ENCODE measurements at regions of chr22 and their contacts with region 1.

Region 1: DNA sequence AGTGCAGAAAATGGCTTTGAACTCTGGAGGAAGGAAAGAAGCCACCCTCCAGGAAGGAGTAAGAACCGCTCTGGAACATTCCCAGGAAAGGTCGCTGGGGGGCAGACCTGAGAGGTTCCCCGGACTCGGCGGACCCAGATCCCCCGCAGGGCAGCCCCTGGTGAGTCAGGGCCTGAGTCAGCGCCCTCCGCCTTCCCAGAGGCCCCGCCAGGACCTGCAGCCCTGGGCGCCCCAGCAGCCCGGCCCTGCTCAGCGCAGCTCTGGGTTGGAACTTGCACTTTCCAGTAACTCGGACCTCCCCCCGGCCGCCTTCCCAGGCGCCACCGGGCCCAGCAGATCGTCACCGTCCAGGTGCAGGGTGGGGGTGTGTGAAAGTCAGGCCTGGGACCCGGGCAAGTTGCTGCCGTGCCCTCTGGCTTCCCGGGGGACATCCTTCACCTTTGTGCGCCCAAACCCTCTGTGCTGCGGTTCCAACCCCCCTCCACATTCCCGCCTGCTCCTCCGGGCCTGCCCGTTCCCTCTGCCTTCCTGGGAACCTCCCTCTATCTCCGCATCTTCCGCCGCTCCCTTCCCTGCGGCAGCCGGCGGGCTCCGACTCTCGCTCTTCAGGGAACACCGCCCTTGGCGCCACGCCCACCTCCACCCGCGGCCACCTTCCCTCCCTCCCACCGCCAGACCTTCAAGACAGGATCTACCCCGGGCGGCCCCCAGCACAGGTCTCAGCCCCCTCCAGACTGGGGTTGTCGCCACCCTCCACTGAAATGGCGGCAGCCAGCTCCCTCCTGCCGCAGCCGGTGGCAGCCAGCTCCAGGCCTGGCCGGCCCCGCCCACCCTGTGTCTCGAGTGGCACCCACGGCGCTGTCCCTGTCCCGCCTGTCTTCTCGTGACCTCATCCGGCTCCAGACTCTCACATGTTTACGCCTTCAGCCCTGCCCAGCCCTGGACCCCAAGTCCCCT is 36.8 kb upstream of the WNT7B start:
- DNase-seq: peak; percentile 93 to 97
- H3K4me3 ChIP-seq: peak overlapping the region; percentile 71
- H3K27ac ChIP-seq: peak overlapping the region; percentile 97
- H3K4me1 ChIP-seq: peaks cover 50% of the 10 kb centered on the region
- H3K27me3 ChIP-seq: no peaks in the 10 kb centered on the region
- CTCF ChIP-seq: peak; percentile 83

Region 2: DNA sequence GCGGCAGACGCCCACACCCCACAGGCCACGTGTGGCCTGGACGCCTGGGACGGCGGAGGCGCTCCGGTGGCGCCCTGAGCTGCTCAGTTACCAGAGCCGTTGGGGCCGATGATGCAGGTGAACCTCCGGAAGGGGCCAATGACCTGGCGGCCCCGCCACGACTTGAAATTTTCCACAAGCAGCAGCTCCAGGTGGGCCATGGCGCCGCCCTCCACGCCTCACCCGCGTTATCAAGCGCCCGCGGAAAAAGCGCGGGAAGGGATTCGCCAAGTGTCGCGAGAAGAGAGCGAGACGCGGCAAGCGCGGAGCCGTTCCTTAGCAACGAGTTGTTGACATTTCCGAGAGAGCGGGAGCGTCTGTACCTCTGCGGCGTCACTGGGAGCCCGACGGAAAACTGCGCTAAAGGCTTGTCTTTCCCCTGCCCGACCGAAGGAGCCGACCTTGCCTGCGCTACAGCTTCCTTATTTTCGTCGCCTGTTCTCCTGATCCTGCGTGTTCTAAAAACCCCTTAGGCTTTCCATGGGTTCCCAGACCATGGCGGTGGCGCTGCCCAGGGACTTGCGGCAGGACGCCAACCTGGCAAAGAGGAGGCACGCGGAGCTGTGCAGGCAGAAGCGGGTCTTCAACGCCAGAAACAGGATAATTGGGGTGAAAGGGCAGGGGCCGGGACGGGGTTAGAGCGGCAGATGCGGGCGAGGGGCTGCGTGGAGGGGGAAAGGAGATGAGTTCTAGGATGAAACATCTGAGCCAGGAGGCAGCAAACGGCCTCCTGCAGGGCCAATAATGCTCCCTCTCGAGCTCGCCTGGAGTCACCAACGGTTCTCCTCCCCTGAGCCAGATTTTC is 600.1 kb before region 1 on chr22 and contains the starts of genes RIBC2 and SMC1B:
- CTCF ChIA-PET with region 1: no interaction called
- POLR2A ChIA-PET with region 1: interaction called, 10 read pairs
- intact Hi-C with region 1: no loop called
- DNase-seq: peak; percentile 78 to 81
- H3K4me3 ChIP-seq: peak within 1 kb of the TSS; percentile 73
- H3K27ac ChIP-seq: peak within 1 kb of the TSS; percentile 16; the same call in 1 of the 2 replicates
- H3K4me1 ChIP-seq: peaks cover 6% of the 10 kb centered on the region
- H3K27me3 ChIP-seq: no peaks in the 10 kb centered on the region
- CTCF ChIP-seq: no peak
- total RNA-seq, gene RIBC2: 4.0 and 11.0 TPM in 2 replicates
- total RNA-seq, gene SMC1B: 0.28 and 0.31 TPM in 2 replicates

Region 3: GRCh38 chr22:45968751-45969413 is 44.9 kb before region 1 on chr22:
- CTCF ChIA-PET with region 1: no interaction called
- POLR2A ChIA-PET with region 1: no interaction called
- intact Hi-C with region 1: no loop called
- DNase-seq: peak in 1 of 2 experiments; percentile 79
- H3K4me3 ChIP-seq: peak overlapping the region; percentile 38; the same call in 1 of the 2 replicates
- H3K27ac ChIP-seq: peak overlapping the region; percentile 62
- H3K4me1 ChIP-seq: peaks cover 41% of the 10 kb centered on the region
- H3K27me3 ChIP-seq: no peaks in the 10 kb centered on the region
- CTCF ChIP-seq: no peak

Region 4: GRCh38 chr22:46035742-46036557 is 22.2 kb after region 1 on chr22:
- CTCF ChIA-PET with region 1: interaction called, 15 read pairs
- POLR2A ChIA-PET with region 1: interaction called, 11 read pairs
- intact Hi-C with region 1: loop called (anchors 1 kb)
- DNase-seq: peak; percentile 96 to 99
- H3K4me3 ChIP-seq: peak overlapping the region; percentile 99
- H3K27ac ChIP-seq: peak overlapping the region; percentile 34; the same call in 1 of the 2 replicates
- H3K4me1 ChIP-seq: peaks cover 15% of the 10 kb centered on the region
- H3K27me3 ChIP-seq: no peaks in the 10 kb centered on the region
- CTCF ChIP-seq: no peak

Region 5: GRCh38 chr22:46076651-46077339 is 63.1 kb after region 1 on chr22:
- CTCF ChIA-PET with region 1: no interaction called
- POLR2A ChIA-PET with region 1: interaction called, 16 read pairs
- intact Hi-C with region 1: loop called (anchors 2 kb)
- DNase-seq: peak; percentile 56 to 63
- H3K4me3 ChIP-seq: peak overlapping the region; percentile 21; the same call in 1 of the 2 replicates
- H3K27ac ChIP-seq: peak overlapping the region; percentile 45
- H3K4me1 ChIP-seq: peaks cover 38% of the 10 kb centered on the region
- H3K27me3 ChIP-seq: no peaks in the 10 kb centered on the region
- CTCF ChIP-seq: no peak

Measured in PC-9 (cell line).